ENCODE measurements at regions of chr4 and their contacts with region 1.

Region 1: GRCh38 chr4:71816676-71817303 is 32.9 kb upstream of the GC start:
- DNase-seq: no peak

Region 2: DNA sequence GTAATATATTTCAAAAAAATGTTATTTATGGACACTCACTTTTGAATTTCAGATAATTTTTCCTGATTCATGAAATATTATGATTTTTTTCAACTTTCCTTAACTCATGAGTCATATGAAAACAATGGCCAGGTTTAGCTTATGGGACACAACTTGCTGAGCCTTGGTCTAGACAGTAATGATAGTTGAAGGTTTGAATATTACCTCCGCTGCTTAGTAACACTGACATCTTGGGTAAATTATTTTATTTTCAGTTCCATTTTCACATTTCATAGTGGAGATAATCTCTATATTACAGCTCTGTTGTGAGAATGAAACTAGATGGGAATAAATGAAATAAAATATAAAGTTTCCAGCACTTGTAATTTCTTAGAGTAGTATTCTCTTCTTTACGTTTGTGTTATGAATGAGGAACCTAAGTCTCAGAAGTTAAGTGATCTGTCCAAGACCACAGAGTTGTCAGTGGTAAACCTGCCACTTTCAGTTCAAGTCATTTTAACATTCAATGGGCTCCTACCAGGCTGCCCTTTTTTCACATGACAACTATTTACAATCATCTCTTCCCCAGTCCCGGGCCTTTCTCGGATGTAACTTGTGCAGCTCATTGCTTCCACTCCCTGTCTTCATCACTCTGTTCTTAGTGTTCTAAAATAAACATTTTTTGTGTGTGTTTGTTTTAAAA is 13.8 kb after region 1 on chr4:
- intact Hi-C with region 1: loop called in 1 of 2 experiments (anchors 1 kb)
- DNase-seq: no peak

Region 3: DNA sequence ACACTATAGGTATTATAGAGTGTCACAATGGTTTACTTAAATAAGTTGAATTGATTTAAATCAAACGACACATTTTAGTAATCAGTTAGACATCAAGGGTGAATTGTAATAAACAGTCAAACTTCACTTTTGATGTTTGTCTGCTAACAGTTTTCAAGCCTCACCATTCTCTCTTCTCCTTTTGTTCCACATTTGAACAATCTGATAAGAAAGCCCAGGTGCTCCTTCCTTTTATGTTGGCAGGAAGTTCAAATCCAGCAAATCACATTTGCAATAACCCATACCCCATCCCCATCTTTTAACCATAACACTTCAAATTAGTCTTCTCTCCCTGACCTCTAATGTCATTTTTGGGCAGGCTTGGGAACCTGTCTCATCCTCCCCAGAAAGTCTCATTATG is 30.5 kb after region 1 on chr4:
- intact Hi-C with region 1: no loop called
- DNase-seq: no peak

Region 4: DNA sequence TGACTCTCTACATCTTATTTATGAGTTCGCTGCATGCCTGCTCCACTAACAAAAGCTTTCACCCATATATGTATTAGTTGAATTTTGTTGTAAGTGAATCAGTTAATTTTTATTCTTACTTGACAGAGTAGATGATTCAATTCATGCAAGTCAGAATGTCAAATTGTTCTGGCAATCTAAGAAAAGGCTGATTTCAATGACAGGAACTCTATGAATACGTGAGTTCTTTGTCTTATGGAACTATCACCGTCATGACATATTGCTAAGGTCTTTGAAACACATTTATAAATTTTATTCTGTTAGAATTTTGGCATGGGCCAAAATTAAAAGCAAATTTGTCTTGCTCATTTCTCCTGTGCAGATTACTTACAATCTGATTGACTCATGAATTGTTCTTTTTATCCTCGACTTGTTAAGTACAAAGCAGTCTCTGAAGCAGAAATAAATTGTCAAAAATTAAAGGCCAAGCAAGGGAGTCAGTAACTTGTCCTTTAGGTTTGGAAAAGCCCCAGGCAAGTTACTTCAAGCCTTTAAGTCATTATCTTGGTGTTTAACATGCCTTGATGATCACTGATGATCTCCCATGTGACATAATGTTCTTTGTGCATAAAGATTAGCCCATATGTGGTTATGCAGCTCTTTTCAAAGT is 56.1 kb after region 1 on chr4:
- intact Hi-C with region 1: no loop called
- DNase-seq: no peak

Measured in posterior vena cava (tissue), 2 donors.